Activated naive CD4-positive, alpha-beta T cell treated with anti-CD3 and anti-CD28 coated beads for 36 hours (primary cell): ENCODE measurements at regions of chr2 and their contacts with region 1.

Region 1: GRCh38 chr2:186426153-186427016 is 59.7 kb upstream of the ZC3H15 start:
- DNase-seq: peak; percentile 31
- H3K4me3 Mint-ChIP-seq: no peak overlapping the region
- H3K27ac Mint-ChIP-seq: no peak overlapping the region
- H3K4me1 Mint-ChIP-seq: peaks cover 23% of the 10 kb centered on the region
- H3K27me3 Mint-ChIP-seq: no peaks in the 10 kb centered on the region

Region 2: DNA sequence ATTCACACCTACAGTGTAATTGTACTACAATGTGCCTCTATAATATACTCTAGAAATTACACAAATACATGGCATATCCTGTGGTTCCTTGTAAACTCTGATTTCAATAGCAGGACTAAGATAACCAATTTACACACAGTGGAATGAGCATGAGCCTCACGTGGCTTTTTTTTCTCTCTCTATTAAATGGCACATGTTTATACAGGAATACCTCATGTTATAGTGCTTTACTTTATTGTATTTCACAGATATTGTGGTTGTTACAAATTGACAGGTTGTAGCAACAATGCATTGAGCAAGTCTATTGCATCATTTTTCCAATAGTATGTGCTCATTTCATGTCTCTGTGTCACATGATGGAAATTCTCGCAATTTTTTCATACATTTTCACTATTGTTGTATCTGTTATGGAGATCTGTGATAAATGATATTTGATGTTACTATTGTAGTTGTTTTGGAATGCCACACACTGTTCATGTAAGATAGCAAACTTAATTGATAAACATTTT is 427.8 kb before region 1 on chr2:
- CTCF ChIA-PET with region 1: no interaction called
- intact Hi-C with region 1: loop called (anchors 1 kb)
- DNase-seq: no peak
- H3K4me3 Mint-ChIP-seq: no peak overlapping the region
- H3K27ac Mint-ChIP-seq: no peak overlapping the region
- H3K4me1 Mint-ChIP-seq: peaks cover 4% of the 10 kb centered on the region
- H3K27me3 Mint-ChIP-seq: no peaks in the 10 kb centered on the region

Region 3: GRCh38 chr2:186407611-186408010 is 18.8 kb before region 1 on chr2:
- CTCF ChIA-PET with region 1: no interaction called
- intact Hi-C with region 1: no loop called
- DNase-seq: no peak
- H3K4me3 Mint-ChIP-seq: no peak overlapping the region
- H3K27ac Mint-ChIP-seq: no peak overlapping the region
- H3K4me1 Mint-ChIP-seq: no peaks in the 10 kb centered on the region
- H3K27me3 Mint-ChIP-seq: no peaks in the 10 kb centered on the region

Region 4: GRCh38 chr2:186485871-186486650 is 59.7 kb after region 1 on chr2 and contains the start of gene ZC3H15:
- CTCF ChIA-PET with region 1: no interaction called
- intact Hi-C with region 1: loop called (anchors 1 kb)
- DNase-seq: peak; percentile 96
- H3K4me3 Mint-ChIP-seq: peak within 1 kb of the TSS; percentile 98
- H3K27ac Mint-ChIP-seq: peak within 1 kb of the TSS; percentile 98
- H3K4me1 Mint-ChIP-seq: peaks cover 60% of the 10 kb centered on the region
- H3K27me3 Mint-ChIP-seq: no peaks in the 10 kb centered on the region
- total RNA-seq, gene ZC3H15: 92.2 to 93.3 TPM